Breast epithelium (tissue), 4 donors: ENCODE measurements at regions of chr11 and their contacts with region 1.

Region 1: DNA sequence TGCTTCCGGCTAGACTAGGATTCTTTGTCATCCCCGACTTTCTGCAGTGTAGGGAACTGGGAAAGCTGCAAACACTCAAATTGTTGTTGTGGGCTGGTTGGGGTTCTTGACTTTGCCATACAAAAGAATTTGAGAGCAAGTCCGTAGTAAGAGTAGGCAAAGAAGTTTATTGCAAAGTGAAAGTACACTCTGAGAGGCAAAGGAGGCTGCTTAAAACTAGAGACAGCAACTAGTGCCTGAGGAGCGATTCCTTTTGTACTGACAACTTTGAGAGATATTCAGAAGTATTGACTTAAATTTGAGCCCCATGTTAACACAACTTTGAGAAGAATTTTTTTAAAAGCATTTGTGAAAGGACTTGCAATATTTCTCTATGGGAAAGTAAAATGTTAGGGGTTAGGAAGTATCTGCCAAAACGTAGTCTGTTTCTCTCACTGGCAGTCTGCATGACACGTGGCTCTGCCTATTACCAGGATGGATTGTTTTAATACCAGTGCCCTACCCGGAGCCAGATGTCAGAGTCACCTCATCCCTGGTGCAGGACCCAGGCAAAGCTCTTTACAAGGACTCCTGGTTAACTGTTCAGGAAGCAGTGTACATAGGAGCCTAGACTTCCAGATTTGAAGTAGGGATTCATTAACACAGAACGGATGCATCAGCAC is 85.0 kb upstream of the CLPB start:
- DNase-seq: no peak
- H3K4me3 ChIP-seq: peak overlapping the region; percentile 16 to 29 (median 28)
- H3K27ac ChIP-seq: no peak overlapping the region
- H3K4me1 ChIP-seq: no peaks in the 10 kb centered on the region
- H3K27me3 ChIP-seq: no peaks in the 10 kb centered on the region
- CTCF ChIP-seq: no peak
- POLR2A ChIP-seq: no peak

Region 2: GRCh38 chr11:71971680-71972079 is 547.7 kb before region 1 on chr11:
- intact Hi-C with region 1: no loop called
- DNase-seq: no peak
- H3K4me3 ChIP-seq: no peak overlapping the region
- H3K27ac ChIP-seq: no peak overlapping the region
- H3K4me1 ChIP-seq: no peaks in the 10 kb centered on the region
- H3K27me3 ChIP-seq: no peaks in the 10 kb centered on the region
- CTCF ChIP-seq: no peak
- POLR2A ChIP-seq: no peak

Region 3: DNA sequence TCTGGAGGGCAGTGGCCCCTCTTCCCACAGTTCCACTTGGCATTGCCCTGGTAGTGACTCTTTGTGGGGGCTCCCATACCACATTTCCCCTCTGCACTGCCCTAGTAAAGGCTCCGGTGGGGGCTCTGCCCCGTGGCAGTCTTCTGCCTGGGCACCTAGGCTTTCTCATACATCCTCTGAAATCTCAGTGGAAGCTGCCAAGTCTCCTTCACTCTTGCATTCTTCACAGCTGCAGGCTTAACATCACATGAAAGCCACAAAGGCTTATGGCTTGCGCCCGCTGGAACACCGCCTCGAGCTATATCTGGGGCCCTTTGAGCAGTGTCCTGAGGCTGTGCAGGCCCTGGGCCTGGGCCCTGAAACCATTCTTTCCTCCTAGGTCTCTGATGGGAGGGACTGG is 1152.3 kb after region 1 on chr11:
- intact Hi-C with region 1: loop called (anchors 5 kb)
- DNase-seq: no peak
- H3K4me3 ChIP-seq: no peak overlapping the region
- H3K27ac ChIP-seq: no peak overlapping the region
- H3K4me1 ChIP-seq: no peaks in the 10 kb centered on the region
- H3K27me3 ChIP-seq: no peaks in the 10 kb centered on the region
- CTCF ChIP-seq: no peak
- POLR2A ChIP-seq: no peak